ENCODE measurements at regions of chr13 and their contacts with region 1.

Region 1: GRCh38 chr13:98653463-98653985 is 76.6 kb upstream of the STK24 start:
- DNase-seq: peak; percentile 10
- H3K4me3 ChIP-seq: no peak overlapping the region
- CTCF ChIP-seq: peak; percentile 90

Region 2: GRCh38 chr13:98445340-98446233 is 207.9 kb before region 1 on chr13:
- CTCF ChIA-PET with region 1: interaction called, 114 read pairs
- POLR2A ChIA-PET with region 1: no interaction called
- DNase-seq: no peak
- H3K4me3 ChIP-seq: no peak overlapping the region
- CTCF ChIP-seq: peak; percentile 98

Region 3: DNA sequence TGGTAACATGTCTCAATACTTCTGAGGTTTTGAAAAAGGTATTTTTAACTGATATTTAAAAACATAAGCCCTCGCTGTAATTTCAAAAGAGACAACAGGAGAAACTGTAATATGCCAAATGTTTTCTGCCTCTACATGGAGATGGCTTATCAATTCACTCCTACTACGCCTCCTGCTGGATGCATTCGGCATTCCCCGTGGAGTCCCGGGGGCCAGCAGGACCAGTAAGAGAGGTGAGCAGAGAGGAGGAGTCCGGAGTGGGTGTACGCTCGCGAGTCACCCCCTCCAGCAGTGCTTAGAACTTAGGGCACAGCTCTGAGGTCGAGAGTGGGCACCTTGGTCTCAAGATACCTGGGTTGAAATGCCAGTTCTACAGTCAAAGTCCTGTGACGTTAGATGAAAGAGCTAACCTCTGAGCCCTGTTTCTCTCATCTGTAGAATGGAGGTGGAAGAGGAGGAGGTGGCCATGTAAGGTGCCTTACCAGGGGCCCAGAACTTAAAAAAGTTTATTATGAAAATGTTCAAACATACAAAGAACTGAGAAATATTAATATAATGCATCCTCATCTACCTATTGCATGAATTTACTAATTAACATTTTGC is 186.8 kb before region 1 on chr13:
- CTCF ChIA-PET with region 1: interaction called, 58 read pairs
- POLR2A ChIA-PET with region 1: no interaction called
- DNase-seq: no peak
- H3K4me3 ChIP-seq: no peak overlapping the region
- CTCF ChIP-seq: peak; percentile 77

Region 4: GRCh38 chr13:98581971-98582680 is 71.4 kb before region 1 on chr13:
- CTCF ChIA-PET with region 1: interaction called, 12 read pairs
- POLR2A ChIA-PET with region 1: no interaction called
- DNase-seq: no peak
- H3K4me3 ChIP-seq: no peak overlapping the region
- CTCF ChIP-seq: no peak

Region 5: DNA sequence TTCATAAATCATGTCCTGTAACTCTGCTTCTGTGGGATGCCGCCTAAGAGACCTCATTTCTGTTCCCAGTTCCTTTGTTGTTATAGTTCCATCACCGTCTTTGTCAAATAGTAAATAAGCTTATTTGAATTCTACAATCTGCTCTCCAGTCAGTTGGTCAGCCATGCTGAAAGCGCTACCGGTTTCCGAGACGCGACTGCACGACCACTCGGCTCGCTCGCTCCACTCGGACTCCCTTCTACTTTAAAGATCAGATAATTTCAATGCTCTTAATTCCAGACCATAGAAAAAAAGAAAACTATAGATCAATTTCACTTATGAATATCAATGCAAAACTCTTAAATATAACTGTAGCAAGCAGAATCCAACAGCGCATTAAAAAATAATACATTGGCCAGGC is 12.4 kb before region 1 on chr13:
- CTCF ChIA-PET with region 1: interaction called, 27 read pairs
- POLR2A ChIA-PET with region 1: no interaction called
- DNase-seq: no peak
- H3K4me3 ChIP-seq: no peak overlapping the region
- CTCF ChIP-seq: no peak

Region 6: DNA sequence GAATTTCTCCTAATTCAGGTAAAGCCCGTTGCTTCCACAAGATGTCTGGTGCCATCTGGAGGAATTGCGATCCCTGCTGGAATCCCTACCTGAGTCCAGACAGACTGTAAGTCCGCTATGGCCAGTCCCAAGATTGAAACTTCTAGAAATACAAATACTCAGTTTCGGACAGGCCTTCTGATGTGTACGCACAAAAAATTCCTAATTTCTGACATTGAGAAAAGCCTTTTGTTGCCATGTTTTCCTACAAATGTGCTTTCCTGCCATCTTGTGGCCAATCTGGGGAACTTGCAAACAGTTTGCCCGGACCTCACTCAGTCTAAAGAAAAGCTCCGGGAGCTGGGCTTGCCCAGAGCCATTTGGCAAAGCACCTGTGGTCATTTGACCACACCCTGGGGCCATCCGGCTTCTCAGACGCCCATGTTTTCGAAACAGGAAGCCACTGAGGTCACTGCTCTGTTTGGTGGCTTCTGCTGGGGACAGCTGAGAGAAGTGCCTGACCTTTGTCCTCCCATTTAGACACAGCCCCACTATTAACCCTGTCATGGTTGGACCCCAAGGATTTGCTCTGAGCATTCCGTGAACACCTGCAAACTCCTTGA is 19.5 kb after region 1 on chr13:
- CTCF ChIA-PET with region 1: interaction called, 46 read pairs
- POLR2A ChIA-PET with region 1: no interaction called
- DNase-seq: peak; percentile 19
- H3K4me3 ChIP-seq: no peak overlapping the region
- CTCF ChIP-seq: peak; percentile 63

Region 7: DNA sequence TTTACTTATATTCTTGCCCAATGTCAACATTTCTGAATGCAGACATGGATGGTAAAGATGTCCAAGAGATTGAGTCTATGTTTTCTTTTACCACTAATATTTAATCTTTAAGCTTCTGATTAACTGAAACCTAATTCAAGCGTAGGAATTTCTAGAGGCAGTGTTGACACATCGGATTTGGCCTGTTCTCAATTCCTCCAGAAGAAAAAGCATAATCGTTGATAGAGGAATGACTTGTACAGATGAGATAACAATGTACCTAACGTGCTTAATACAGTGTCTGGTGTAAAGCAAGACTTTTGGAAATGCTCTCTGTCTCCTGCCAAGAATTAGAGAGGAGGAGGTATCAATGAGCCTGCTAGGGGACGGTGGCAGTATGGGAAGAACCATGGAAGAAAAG is 63.7 kb after region 1 on chr13:
- CTCF ChIA-PET with region 1: no interaction called
- POLR2A ChIA-PET with region 1: no interaction called
- DNase-seq: no peak
- H3K4me3 ChIP-seq: no peak overlapping the region
- CTCF ChIP-seq: no peak

Region 8: DNA sequence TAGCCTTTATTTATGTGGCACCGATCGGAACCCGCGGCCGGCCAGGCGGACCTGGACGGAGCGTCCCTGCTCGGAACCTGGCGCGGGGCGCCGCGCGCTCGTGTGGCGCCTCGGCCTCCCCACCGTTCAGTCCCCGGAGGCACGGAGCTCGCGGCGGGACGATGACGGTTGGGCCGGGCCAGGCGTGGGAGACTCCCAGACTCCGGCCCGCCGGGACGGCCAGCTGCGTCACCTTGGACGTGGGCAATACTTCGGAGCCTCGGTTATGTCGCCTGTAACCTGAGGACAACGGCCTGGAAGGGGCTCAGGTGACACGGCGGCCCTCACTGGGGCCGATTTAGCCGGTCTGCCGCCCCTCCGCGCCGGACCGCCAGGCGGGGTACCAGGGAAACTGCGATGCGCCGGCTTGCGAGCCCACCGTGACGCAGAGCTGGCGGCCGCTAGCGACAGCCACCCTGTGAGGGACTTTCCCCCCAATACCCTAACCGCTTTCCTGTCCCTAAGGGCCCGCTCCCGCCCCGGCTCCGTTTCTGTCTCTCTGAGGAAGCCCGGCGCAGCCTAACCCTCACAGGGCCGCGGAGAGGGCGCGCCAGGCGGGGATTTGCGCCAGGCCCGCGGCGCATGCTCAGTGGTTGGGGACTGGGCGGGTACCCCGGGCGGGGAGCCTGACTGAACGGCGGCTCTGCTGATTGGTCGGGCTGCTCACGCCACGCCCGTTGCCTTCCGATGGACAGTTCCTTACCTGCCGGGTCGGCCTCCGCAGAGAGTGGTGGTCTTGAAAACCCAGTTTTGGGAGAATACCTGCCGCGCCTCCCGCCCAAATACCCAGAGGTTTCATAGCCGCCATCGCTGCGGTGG is 433.8 kb after region 1 on chr13:
- CTCF ChIA-PET with region 1: no interaction called
- POLR2A ChIA-PET with region 1: no interaction called
- DNase-seq: no peak
- H3K4me3 ChIP-seq: peak overlapping the region; percentile 66
- CTCF ChIP-seq: peak; percentile 31